ENCODE measurements at regions of chr22 and their contacts with region 1.

Region 1: DNA sequence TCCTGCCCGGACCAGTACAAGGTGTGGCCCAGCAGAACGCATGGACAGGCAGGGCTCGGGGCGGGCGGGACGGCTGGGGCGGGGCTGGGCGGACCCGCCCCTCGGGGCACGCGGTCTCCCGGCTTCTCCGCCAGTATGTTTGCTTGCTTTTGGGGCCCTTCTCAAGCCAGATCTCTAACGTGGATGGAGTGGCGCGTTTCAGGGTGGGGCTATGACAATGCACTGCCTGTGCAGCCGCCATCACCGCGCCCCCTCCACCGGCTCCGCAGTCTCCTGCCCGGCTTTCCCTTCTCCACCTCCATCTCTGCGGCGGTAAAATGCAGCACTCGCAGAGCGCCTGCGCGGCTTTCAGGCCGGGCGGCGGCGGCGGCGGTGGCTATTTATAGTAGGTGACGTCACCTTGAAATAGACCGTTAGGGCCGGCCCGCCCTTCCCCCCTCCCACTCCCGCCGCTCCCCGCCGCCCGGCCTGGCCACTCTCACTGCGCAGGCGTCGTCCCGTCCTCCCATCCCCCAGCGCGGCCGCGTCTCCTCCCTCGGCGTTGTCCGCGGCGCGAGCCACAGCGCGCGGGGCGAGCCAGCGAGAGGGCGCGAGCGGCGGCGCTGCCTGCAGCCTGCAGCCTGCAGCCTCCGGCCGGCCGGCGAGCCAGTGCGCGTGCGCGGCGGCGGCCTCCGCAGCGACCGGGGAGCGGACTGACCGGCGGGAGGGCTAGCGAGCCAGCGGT is at the start of gene YWHAH:
- DNase-seq: peak; percentile 98
- ATAC-seq: peak; percentile 98
- total RNA-seq, gene YWHAH: 150 TPM

Region 2: DNA sequence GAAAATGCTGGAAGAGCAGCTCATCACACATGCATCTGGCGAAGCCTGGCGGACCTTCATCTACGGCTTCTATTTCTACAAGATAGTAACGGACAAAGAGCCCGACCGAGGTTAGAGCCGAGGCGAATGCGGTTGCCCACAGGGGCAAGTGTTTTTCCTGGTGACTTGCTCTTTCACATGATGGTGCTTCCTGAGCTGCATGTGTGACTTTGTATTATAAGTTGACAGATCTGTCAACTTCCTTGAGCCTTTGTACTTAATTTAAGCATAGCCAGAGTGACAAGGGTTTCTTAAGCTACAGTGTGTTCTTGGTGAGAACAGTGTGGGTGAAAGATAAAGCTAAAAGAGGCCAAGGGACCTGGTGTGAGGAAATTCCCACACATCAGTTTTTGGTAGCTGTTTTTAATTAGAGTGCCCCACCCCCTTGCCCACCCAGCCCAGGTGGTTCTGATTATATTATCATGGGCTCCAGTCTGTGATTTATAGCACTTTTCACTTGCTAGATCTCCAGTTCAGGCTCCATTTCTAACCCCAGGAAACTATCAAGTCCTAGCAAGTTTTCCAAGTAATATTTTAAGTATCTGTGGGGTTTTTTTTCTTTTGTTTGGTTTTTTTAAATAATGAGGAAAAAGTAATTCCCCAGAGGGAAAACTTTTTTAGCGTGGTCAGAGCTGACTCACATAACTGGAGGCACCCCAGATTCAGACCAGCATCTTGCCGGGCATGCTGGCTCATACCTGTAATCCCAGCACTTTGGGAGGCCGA is 67.8 kb before region 1 on chr22:
- intact Hi-C with region 1: no loop called
- DNase-seq: no peak
- ATAC-seq: no peak

Region 3: DNA sequence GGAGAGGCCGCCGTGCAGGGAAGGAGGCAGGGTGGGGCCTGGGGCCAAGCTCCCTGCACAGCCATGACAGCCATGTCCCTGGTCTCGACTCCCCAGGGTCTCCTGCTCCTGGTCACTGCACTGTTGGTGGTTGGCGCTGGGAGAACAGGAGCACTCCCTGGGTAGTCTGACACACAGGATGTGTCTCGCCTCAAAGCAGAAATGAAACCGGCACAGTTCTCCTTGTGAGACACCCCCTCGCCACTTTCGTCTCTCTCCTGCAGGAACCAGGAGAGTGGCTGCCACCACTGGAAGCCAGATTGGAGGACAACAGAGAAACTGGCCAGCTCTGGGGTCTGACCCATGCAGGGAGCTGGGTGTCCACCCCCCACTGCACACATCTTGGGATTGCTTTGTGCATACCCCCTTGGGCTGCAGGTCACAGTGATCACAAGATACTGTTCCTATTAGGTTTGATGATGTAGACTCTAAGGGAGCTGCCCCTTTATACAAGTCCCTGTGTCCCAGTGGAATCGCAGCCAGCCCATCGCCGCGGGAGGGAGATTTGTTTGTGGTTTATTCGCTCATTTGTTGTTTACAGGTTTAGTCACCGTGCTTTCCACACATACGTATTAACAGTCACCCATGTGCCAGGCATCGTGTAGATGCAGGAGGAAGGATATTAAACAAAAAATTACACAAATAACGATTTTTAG is 26.8 kb before region 1 on chr22:
- intact Hi-C with region 1: loop called (anchors 1 kb)
- DNase-seq: no peak
- ATAC-seq: peak; percentile 56